Posterior cingulate gyrus (tissue), 11 donors: ENCODE measurements at regions of chr2 and their contacts with region 1.

Region 1: GRCh38 chr2:69436938-69437750 is at the start of gene NFU1:
- DNase-seq: peak; percentile 92 to 99 (median 94)

Region 2: DNA sequence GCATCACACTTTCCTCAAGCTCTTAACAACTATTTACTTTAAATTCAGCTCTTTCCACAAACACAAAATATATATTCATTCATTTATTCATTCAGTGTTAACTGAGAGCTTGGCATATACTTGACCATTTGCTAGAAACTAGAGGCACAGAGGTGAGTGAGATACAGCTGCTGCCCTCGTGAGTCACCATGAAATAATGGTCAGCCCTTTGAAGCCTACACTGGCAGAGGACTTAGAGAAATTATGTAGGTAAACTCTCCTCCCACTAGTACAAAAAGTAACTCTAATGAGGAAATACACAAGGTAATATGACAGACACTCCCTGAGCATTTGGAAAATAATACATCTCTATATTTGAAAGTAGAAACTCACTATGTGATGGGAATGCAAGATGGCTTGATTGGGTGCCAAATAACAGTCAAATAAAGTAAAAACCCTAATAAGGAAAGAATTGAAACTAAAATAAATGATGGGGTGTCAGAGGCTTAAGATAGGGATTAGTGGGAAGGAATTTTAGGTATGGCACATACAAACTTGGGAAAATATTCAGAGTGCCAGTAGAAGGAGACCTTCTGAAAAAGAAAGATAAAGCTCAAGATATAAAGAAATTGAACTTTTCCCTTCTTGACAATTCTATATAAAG is 363.1 kb before region 1 on chr2:
- intact Hi-C with region 1: no loop called
- DNase-seq: no peak

Region 3: GRCh38 chr2:69386789-69387734 is 50.1 kb before region 1 on chr2 and contains the start of gene GFPT1:
- intact Hi-C with region 1: loop called (anchors 1 kb)
- DNase-seq: peak; percentile 84 to 99 (median 92)

Region 4: DNA sequence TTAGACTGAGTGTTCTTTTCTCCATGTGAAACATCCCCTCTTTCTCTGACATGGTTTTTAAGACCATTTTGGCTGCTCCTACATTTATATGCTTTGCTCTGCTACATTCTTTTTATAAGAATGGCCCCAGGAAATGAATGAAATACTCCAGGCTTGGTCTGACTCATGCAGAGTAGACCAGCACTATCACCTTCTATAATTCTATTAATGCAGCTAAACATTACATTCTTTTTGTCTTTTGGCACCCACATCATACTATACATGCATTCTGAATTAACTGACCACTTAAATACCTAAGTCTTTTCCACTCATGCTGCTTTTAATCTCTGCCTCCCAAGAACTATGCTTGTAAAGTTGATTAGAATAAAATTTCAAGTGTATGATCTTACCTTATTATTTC is 112.3 kb after region 1 on chr2:
- intact Hi-C with region 1: loop called (anchors 10 kb)
- DNase-seq: no peak